GM13977 (cell line): ENCODE measurements at regions of chr1 and their contacts with region 1.

Region 1: DNA sequence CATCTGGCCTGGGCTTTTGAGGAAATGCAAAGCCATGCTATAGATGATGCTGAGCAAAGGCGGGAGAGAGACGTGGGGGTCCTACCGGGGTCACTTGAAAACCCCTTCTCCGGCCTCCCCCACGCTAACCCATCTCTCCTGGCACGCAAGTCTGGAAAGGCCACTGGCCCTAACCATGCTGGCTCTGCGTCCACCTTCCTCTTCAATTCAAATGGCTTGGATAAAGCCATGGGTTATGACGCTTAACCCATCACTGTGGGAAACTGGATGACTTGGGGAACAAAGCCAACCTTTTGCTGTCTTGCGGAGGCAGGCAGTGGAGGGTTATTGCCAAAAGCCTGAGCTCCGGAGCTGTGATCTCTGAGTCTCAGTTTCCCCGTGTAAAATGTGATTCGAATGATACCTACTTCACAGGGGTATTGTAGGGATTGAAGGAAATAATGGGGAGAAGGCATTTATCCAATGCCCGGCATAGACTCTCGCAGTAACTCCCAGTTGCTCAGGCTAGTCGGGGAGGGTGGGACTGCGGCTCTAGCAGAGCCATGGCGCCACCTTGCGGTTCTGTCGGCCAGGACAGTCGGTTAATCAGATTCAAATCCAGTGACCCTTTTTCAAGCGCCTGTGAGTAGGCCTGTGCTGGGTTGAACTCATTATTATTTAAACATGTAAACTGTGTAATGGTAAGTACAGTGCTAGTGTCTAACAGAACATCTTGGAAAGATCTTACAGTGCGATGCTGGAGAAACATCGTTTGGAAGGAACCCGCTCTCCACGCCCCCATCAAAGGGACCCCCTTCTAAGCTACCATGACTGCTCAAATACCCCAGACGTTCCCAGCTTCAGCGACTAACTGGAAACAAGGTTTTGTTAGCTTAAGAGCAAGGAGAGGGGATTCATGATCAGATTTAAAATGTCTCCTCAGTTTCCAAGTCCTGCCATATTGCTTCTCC is 20.3 kb downstream of the NEK2 start:
- DNase-seq: peak; percentile 74
- CTCF ChIP-seq: peak; percentile 95

Region 2: GRCh38 chr1:210584439-210585113 is 1070.5 kb before region 1 on chr1:
- in situ Hi-C with region 1: loop called (anchors 25 kb)
- DNase-seq: peak; percentile 68
- CTCF ChIP-seq: peak; percentile 85

Region 3: GRCh38 chr1:211309617-211310016 is 345.5 kb before region 1 on chr1:
- in situ Hi-C with region 1: no loop called
- DNase-seq: no peak
- CTCF ChIP-seq: no peak

Region 4: GRCh38 chr1:211326528-211327345 is 328.4 kb before region 1 on chr1 and contains the start of gene TRAF5:
- in situ Hi-C with region 1: loop called (anchors 25 kb)
- DNase-seq: peak; percentile 79
- CTCF ChIP-seq: no peak

Region 5: GRCh38 chr1:211476200-211476849 is 178.8 kb before region 1 on chr1:
- in situ Hi-C with region 1: loop called (anchors 10 kb)
- DNase-seq: peak; percentile 82
- CTCF ChIP-seq: peak; percentile 85